CD8-positive, alpha-beta T cell (primary cell): ENCODE measurements at regions of chr22 and their contacts with region 1.

Region 1: GRCh38 chr22:23893943-23894709 is at the start of gene MIF:
- DNase-seq: peak; percentile 88 to 98 (median 94)
- ATAC-seq: peak; percentile 82
- H3K4me3 ChIP-seq: peak within 1 kb of the TSS; percentile 66 to 79
- H3K4me3 Mint-ChIP-seq: peak within 1 kb of the TSS; percentile 93
- H3K27ac ChIP-seq: peak within 1 kb of the TSS; percentile 75 to 92
- H3K27ac Mint-ChIP-seq: peak within 1 kb of the TSS; percentile 95
- H3K4me1 ChIP-seq: peaks cover 16% of the 10 kb centered on the region
- H3K4me1 Mint-ChIP-seq: peaks cover 23% of the 10 kb centered on the region
- H3K27me3 ChIP-seq: no peaks in the 10 kb centered on the region
- H3K27me3 Mint-ChIP-seq: no peaks in the 10 kb centered on the region
- CTCF ChIP-seq: peak; percentile 76
- total RNA-seq, gene MIF: 181 to 191 TPM

Region 2: DNA sequence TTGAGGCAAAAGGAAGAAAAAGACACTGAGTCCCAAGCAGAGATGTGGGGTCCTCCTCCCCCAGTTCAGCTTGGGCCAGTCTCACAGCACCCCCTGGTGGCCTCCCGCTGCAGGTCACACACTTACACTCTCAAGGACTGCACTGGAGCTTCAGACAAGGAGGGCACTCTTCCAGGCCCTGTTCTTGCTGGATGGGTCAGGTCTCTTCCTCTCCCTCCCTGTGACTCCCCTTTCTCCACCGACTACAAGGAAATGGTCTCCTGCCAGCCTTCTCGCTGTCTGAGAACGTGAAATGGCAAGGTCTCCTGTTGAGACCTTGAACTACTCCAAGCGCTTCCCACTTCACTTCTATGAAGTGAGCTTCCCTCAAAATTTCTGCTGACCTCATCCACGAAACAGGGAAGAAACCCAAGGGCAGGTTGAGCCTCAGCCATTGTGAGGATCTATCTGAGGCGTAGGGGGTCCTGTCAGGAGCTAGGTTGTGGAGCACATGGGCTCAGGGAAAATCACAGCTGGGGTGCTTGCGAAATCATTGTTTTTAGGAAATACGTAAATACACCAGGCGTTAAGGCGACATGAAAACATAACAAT is 302.8 kb before region 1 on chr22:
- CTCF ChIA-PET with region 1: no interaction called
- POLR2A ChIA-PET with region 1: no interaction called
- intact Hi-C with region 1: no loop called
- DNase-seq: peak; percentile 39 to 70 (median 62)
- ATAC-seq: peak; percentile 61
- H3K4me3 ChIP-seq: no peak overlapping the region
- H3K4me3 Mint-ChIP-seq: no peak overlapping the region
- H3K27ac ChIP-seq: no peak overlapping the region
- H3K27ac Mint-ChIP-seq: no peak overlapping the region
- H3K4me1 ChIP-seq: no peaks in the 10 kb centered on the region
- H3K4me1 Mint-ChIP-seq: no peaks in the 10 kb centered on the region
- H3K27me3 ChIP-seq: no peaks in the 10 kb centered on the region
- H3K27me3 Mint-ChIP-seq: peaks cover 7% of the 10 kb centered on the region
- CTCF ChIP-seq: peak; percentile 64

Region 3: GRCh38 chr22:23838681-23839468 is 55.3 kb before region 1 on chr22 and contains the start of gene DERL3:
- CTCF ChIA-PET with region 1: interaction called, 3 read pairs
- POLR2A ChIA-PET with region 1: no interaction called
- intact Hi-C with region 1: loop called in 1 of 2 experiments (anchors 1 kb)
- DNase-seq: peak; percentile 84 to 96 (median 92)
- ATAC-seq: peak; percentile 93
- H3K4me3 ChIP-seq: peak within 1 kb of the TSS; percentile 61 to 77
- H3K4me3 Mint-ChIP-seq: peak within 1 kb of the TSS; percentile 94
- H3K27ac ChIP-seq: peak within 1 kb of the TSS in 1 of 2 experiments; percentile 46
- H3K27ac Mint-ChIP-seq: peak within 1 kb of the TSS; percentile 82
- H3K4me1 ChIP-seq: peaks cover 7% of the 10 kb centered on the region
- H3K4me1 Mint-ChIP-seq: peaks cover 20% of the 10 kb centered on the region
- H3K27me3 ChIP-seq: no peaks in the 10 kb centered on the region
- H3K27me3 Mint-ChIP-seq: no peaks in the 10 kb centered on the region
- CTCF ChIP-seq: no peak
- total RNA-seq, gene DERL3: 0.81 to 0.92 TPM

Region 4: GRCh38 chr22:23857606-23858483 is 36.3 kb before region 1 on chr22 and contains the start of gene SLC2A11:
- CTCF ChIA-PET with region 1: interaction called, 7 read pairs
- POLR2A ChIA-PET with region 1: interaction called, 24 read pairs
- intact Hi-C with region 1: loop called (anchors 5 kb)
- DNase-seq: peak; percentile 83 to 98 (median 93)
- ATAC-seq: peak; percentile 95
- H3K4me3 ChIP-seq: peak within 1 kb of the TSS; percentile 65 to 96
- H3K4me3 Mint-ChIP-seq: peak within 1 kb of the TSS; percentile 98
- H3K27ac ChIP-seq: peak within 1 kb of the TSS; percentile 50 to 67
- H3K27ac Mint-ChIP-seq: peak within 1 kb of the TSS; percentile 85
- H3K4me1 ChIP-seq: peaks cover 11% of the 10 kb centered on the region
- H3K4me1 Mint-ChIP-seq: peaks cover 21% of the 10 kb centered on the region
- H3K27me3 ChIP-seq: no peaks in the 10 kb centered on the region
- H3K27me3 Mint-ChIP-seq: no peaks in the 10 kb centered on the region
- CTCF ChIP-seq: peak; percentile 23
- total RNA-seq, gene SLC2A11: 12.7 to 14.3 TPM

Region 5: GRCh38 chr22:23922651-23923320 is 28.7 kb after region 1 on chr22:
- CTCF ChIA-PET with region 1: no interaction called
- POLR2A ChIA-PET with region 1: no interaction called
- intact Hi-C with region 1: no loop called
- DNase-seq: peak in 2 of 9 experiments; percentile 0 to 15
- ATAC-seq: no peak
- H3K4me3 ChIP-seq: no peak overlapping the region
- H3K4me3 Mint-ChIP-seq: no peak overlapping the region
- H3K27ac ChIP-seq: no peak overlapping the region
- H3K27ac Mint-ChIP-seq: peak overlapping the region; percentile 21
- H3K4me1 ChIP-seq: no peaks in the 10 kb centered on the region
- H3K4me1 Mint-ChIP-seq: peaks cover 9% of the 10 kb centered on the region
- H3K27me3 ChIP-seq: no peaks in the 10 kb centered on the region
- H3K27me3 Mint-ChIP-seq: no peaks in the 10 kb centered on the region
- CTCF ChIP-seq: no peak

Region 6: GRCh38 chr22:24011735-24012068 is 117.6 kb after region 1 on chr22:
- CTCF ChIA-PET with region 1: interaction called, 4 read pairs
- POLR2A ChIA-PET with region 1: interaction called, 5 read pairs
- intact Hi-C with region 1: loop called in 1 of 2 experiments (anchors 5 kb)
- DNase-seq: no peak
- ATAC-seq: no peak
- H3K4me3 ChIP-seq: peak overlapping the region; percentile 71 to 87
- H3K4me3 Mint-ChIP-seq: peak overlapping the region; percentile 97
- H3K27ac ChIP-seq: peak overlapping the region; percentile 69 to 77
- H3K27ac Mint-ChIP-seq: peak overlapping the region; percentile 94
- H3K4me1 ChIP-seq: peaks cover 10% of the 10 kb centered on the region
- H3K4me1 Mint-ChIP-seq: peaks cover 40% of the 10 kb centered on the region
- H3K27me3 ChIP-seq: no peaks in the 10 kb centered on the region
- H3K27me3 Mint-ChIP-seq: no peaks in the 10 kb centered on the region
- CTCF ChIP-seq: no peak